Right ventricle myocardium inferior (tissue), 1 donor: ENCODE measurements at regions of chr16 and their contacts with region 1.

Region 1: GRCh38 chr16:67883872-67884261 is 818 bp upstream of the NRN1L start:
- DNase-seq: peak; percentile 76
- ATAC-seq: no peak

Region 2: DNA sequence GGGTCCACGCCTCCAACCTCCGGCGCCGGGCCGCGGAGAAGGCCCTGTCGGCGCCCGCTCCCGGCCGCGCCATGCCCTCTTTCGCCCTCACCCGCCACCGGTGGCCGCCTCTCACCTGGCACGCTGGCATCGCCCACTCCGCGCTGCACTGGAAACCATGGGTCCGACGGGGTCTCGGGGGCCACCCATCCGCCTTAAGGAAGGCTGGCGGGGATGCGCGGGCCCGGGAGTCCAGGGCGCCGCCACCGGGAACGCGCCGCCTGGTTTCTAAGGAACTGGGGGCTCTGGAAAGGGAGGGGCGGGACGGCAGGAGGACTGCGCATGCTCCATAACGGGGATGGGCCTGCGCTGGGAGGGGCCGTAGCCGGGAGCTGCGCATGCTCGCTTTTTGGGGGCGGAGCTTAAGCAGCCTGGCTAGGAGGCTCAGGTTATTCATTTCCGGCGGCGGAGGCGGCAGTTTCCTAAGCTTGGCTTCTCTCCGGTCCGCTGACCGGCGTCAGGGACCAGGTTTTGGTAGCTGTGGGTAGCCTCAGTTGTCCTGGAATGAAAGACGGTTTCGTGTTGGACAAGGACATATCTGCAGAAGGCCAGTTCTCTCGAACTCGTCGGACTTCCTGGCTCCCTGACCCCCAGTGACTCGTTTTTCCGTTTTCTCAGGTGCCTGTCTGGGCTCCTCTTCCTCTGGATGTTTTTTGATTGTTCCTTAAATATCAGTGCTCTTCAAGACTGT is 164.7 kb before region 1 on chr16 and contains the start of gene GFOD2:
- intact Hi-C with region 1: no loop called
- DNase-seq: peak; percentile 96
- ATAC-seq: peak; percentile 99
- total RNA-seq, gene GFOD2: 9.0 TPM

Region 3: GRCh38 chr16:67862623-67863583 is 21.0 kb before region 1 on chr16:
- intact Hi-C with region 1: loop called (anchors 1 kb)
- DNase-seq: peak; percentile 82
- ATAC-seq: peak; percentile 94

Region 4: DNA sequence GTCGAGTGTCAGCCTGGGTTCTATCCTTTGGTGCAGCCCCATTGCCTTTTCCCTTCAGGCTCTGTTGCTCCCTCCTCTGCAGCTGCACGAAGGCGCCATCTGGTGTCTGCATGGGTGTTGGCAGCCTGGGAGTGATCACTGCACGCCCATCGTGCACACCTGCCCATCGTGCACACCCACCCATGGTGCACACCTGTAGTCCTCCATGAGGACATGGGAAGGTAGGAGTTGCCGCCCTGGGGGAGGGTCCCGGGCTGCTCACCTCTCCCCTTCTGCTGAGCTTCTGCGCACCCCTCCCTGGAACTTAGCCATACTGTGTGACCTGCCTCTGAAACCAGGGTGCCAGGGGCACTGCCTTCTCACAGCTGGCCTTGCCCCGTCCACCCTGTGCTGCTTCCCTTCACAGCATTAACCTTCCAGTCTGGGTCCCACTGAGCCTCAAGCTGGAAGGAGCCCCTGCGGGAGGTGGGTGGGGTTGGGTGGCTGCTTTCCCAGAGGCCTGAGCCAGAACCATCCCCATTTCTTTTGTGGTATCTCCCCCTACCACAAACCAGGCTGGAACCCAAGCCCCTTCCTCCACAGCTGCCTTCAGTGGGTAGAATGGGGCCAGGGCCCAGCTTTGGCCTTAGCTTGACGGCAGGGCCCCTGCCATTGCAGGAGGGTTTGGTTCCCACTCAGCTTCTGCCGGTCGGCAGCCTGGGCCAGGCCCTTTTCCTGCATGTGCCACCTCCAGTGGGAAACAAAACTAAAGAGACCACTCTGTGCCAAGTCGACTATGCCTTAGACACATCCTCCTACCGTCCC is 44.9 kb after region 1 on chr16:
- intact Hi-C with region 1: loop called (anchors 2 kb)
- DNase-seq: peak; percentile 80
- ATAC-seq: peak; percentile 75